PC-3 (cell line): ENCODE measurements at regions of chr11 and their contacts with region 1.

Region 1: DNA sequence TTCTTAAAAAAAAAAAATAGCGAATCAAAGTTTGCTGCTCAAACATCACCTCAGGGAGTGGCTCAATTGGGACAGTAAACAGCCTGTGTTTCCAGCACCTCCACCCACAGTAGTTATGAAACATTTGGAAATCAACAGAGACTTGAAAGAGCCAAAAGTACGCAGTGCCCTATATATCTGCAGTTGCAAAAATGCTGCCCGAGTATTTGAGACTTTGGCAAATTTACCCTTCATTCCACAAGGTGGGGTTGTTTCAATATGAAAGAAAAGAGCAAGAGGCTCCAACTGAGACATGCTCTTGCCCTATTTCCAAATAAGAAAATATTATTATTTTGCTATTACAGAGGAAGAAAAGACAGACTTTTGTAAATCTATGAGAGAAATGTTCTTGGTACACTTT is 851.1 kb upstream of the RAG2 start:
- DNase-seq: peak; percentile 81
- ATAC-seq: peak; percentile 90
- H3K4me3 ChIP-seq: no peak overlapping the region
- H3K27ac ChIP-seq: no peak overlapping the region
- H3K4me1 ChIP-seq: peaks cover 15% of the 10 kb centered on the region
- H3K27me3 ChIP-seq: no peaks in the 10 kb centered on the region
- CTCF ChIP-seq: peak; percentile 76

Region 2: DNA sequence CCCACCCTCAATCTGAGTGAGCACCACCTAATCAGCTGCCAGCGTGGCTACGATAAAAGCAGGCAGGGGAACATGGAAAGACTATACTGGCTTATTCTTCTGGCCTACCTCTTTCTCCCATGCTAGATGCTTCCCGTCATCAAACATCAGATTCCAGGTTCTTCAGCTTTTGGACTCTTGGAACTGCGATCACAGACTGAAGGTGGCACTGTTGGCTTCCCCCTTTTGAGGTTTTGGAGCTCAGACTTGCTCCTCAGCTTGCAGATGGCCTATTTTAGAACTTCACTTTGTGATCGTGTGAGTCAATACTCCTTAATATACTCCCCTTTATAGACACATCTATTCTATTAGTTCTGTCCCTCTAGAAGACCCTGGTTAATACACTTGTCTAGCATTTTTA is 307.4 kb before region 1 on chr11:
- CTCF ChIA-PET with region 1: no interaction called
- POLR2A ChIA-PET with region 1: no interaction called
- intact Hi-C with region 1: loop called (anchors 5 kb)
- DNase-seq: peak; percentile 53
- ATAC-seq: peak; percentile 46
- H3K4me3 ChIP-seq: no peak overlapping the region
- H3K27ac ChIP-seq: no peak overlapping the region
- H3K4me1 ChIP-seq: no peaks in the 10 kb centered on the region
- H3K27me3 ChIP-seq: no peaks in the 10 kb centered on the region
- CTCF ChIP-seq: peak; percentile 55; the same call in 1 of the 2 replicates

Region 3: GRCh38 chr11:37525336-37525735 is 76.2 kb after region 1 on chr11:
- CTCF ChIA-PET with region 1: no interaction called
- POLR2A ChIA-PET with region 1: no interaction called
- intact Hi-C with region 1: loop called (anchors 1 kb)
- DNase-seq: peak; percentile 42
- ATAC-seq: peak; percentile 50
- H3K4me3 ChIP-seq: no peak overlapping the region
- H3K27ac ChIP-seq: no peak overlapping the region
- H3K4me1 ChIP-seq: no peaks in the 10 kb centered on the region
- H3K27me3 ChIP-seq: no peaks in the 10 kb centered on the region
- CTCF ChIP-seq: peak; percentile 61

Region 4: DNA sequence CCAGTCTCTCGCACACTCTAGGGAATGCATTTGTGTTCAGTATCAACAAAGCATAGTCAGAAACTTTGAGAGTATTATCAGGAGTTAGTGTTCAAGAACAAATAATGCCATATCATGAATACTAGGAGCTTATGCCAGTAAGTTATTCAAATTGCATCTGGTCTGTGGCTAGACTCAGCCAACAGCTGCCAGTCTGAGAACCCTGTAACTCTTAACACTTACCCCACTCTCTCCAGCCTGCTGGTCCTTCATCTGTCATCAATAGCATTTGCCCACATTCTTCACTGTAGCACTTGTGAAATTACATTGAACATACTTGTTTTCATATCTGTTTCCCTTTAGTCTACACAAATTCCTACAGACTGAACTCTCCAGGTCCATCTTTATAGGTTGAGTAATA is 306.4 kb after region 1 on chr11:
- CTCF ChIA-PET with region 1: no interaction called
- POLR2A ChIA-PET with region 1: no interaction called
- intact Hi-C with region 1: no loop called
- DNase-seq: no peak
- ATAC-seq: no peak
- H3K4me3 ChIP-seq: no peak overlapping the region
- H3K27ac ChIP-seq: no peak overlapping the region
- H3K4me1 ChIP-seq: no peaks in the 10 kb centered on the region
- H3K27me3 ChIP-seq: no peaks in the 10 kb centered on the region
- CTCF ChIP-seq: no peak

Region 5: DNA sequence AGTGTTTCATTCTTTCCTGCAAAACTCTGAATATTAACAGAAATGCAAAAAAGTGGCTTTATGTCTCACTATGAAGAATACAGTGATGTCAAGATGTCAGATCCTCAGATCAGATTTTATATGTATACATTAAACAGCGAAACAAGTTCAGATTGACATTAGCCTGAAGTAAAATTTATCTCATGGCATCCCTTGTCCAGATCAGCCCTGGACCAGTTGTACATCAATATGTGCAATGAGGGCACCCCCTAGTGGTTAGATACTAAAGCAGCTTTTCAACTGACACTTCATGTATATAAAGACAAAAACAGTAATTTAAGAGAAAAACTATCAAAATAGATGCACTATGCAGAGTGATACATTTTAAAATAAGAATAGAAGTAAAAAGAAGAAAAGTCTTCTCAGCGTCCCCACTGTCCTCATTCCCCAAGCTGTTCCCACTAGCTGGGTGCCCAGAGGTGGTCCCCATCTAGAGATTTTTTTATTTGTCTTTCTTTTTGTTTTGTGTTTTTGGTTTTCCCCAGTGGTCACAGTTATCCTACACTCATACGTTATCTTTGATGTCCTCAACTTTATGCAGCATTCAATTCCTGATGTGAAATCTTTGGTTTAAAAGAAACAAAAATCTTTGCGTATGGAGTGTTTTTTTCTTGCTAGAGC is 1342.3 kb after region 1 on chr11:
- CTCF ChIA-PET with region 1: no interaction called
- POLR2A ChIA-PET with region 1: no interaction called
- intact Hi-C with region 1: loop called (anchors 2 kb)
- DNase-seq: peak; percentile 75
- ATAC-seq: peak; percentile 67
- H3K4me3 ChIP-seq: no peak overlapping the region
- H3K27ac ChIP-seq: no peak overlapping the region
- H3K4me1 ChIP-seq: no peaks in the 10 kb centered on the region
- H3K27me3 ChIP-seq: no peaks in the 10 kb centered on the region
- CTCF ChIP-seq: peak; percentile 85